ENCODE measurements at regions of chr19 and their contacts with region 1.

Region 1: GRCh38 chr19:7340959-7341837 is 7.5 kb upstream of the ARHGEF18 start:
- DNase-seq: peak; percentile 94
- H3K4me3 ChIP-seq: peak overlapping the region; percentile 17
- H3K27ac ChIP-seq: peak overlapping the region; percentile 96
- H3K4me1 ChIP-seq: peaks cover 95% of the 10 kb centered on the region
- CTCF ChIP-seq: peak; percentile 96

Region 2: DNA sequence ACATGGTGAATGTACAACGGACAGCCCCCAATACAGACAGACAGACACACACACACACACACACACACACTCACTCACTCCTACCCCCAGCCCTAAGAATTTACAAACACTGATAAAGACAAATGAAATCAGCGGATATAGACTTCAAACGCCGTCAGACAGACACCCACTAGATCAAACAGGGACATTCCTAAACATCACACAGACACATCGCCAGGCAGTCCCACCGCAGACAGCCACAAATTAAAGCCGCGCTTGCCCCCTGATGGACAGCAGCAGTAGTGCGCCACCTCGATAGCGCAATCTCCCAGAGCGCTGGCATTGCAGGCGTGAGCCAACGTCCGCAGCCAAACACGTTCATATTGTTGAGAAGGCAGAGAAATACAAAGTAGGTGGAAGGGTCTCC is 478.5 kb before region 1 on chr19:
- CTCF ChIA-PET with region 1: no interaction called
- POLR2A ChIA-PET with region 1: no interaction called
- intact Hi-C with region 1: loop called (anchors 5 kb)
- DNase-seq: peak; percentile 96
- H3K4me3 ChIP-seq: peak overlapping the region; percentile 62
- H3K27ac ChIP-seq: peak overlapping the region; percentile 56
- H3K4me1 ChIP-seq: peaks cover 18% of the 10 kb centered on the region
- CTCF ChIP-seq: peak; percentile 100

Region 3: DNA sequence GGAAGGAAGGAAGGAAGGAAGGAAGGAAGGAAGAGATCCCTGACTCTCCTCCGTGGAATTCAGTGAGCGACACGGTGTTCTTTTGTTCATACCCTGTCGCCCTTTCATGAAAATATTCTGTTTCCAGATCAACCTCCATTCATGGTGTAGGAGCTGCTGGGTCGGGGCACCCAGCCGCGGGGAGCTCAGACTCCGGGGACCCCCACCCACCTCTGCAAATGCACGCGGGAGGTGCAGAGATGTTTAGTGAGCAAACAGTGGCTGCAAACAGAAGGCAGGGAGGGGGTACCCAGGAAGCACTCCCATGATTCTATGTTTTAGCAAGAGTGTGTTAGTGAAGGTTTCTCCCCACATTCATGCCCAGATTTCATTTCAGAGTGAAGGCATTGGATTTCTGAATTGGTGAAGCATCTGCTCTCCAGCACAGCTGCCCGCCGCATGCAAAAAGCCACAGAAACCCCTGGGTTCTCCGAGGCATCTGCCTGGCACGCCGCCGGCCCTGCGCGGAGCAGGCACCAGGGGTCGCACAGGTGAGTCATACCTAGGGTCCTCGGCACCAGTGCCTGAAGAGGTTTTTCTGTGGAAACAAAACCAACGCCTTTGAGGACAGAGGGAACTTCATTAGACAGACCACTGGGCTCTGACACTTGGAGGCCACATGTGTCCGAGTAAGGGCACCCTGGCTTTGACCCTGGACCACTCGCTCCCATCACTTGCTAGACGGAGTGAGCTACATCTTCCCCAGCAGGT is 191.1 kb before region 1 on chr19:
- CTCF ChIA-PET with region 1: no interaction called
- POLR2A ChIA-PET with region 1: no interaction called
- intact Hi-C with region 1: loop called (anchors 1 kb)
- DNase-seq: no peak
- H3K4me3 ChIP-seq: no peak overlapping the region
- H3K27ac ChIP-seq: no peak overlapping the region
- H3K4me1 ChIP-seq: no peaks in the 10 kb centered on the region
- CTCF ChIP-seq: no peak

Region 4: GRCh38 chr19:7242601-7243258 is 98.5 kb before region 1 on chr19:
- CTCF ChIA-PET with region 1: no interaction called
- POLR2A ChIA-PET with region 1: no interaction called
- intact Hi-C with region 1: loop called (anchors 1 kb)
- DNase-seq: peak; percentile 62
- H3K4me3 ChIP-seq: peak overlapping the region; percentile 60
- H3K27ac ChIP-seq: peak overlapping the region; percentile 83
- H3K4me1 ChIP-seq: peaks cover 58% of the 10 kb centered on the region
- CTCF ChIP-seq: no peak

Region 5: DNA sequence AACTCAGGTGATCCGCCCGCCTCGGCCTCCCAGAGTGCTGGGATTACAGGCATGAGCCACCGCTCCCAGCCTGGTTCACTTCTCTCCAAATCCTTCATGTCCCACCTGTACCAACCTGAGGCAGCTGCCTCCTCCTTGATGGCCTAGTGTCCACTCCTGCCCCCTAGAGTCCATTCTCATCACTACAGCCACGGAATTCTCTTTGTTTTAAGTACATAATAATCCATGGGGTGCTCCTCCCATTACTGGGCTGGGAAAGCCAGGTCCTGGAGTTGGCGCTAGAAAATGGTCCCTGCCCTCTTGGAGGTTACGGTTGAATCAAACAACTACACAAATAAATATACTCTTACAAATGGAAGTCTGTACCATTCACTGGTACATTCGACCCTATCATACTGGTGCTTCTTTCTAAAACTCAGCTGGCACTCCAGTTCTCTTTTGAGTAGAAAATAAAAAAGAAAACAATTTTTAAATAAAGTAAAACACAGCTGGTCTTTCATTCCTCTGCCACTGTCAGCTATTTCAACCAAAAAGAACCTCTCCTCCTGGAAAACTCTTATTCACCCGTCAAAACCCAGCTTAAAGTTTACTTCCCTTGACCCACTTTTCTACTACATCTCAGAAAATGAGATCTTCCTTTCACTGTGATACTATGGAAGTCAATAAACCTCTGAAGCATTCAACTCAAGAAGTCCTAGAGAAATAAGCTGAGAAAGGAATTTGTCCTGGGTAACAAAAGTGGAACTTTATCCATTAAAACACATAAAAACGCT is 14.9 kb before region 1 on chr19:
- CTCF ChIA-PET with region 1: interaction called, 4 read pairs
- POLR2A ChIA-PET with region 1: interaction called, 18 read pairs
- intact Hi-C with region 1: loop called (anchors 1 kb)
- DNase-seq: peak; percentile 71
- H3K4me3 ChIP-seq: no peak overlapping the region
- H3K27ac ChIP-seq: no peak overlapping the region
- H3K4me1 ChIP-seq: peaks cover 12% of the 10 kb centered on the region
- CTCF ChIP-seq: peak; percentile 87